BJ (cell line): ENCODE measurements at regions of chr11 and their contacts with region 1.

Region 1: GRCh38 chr11:121464352-121464946 is 11.7 kb upstream of the SORL1-AS1 start:
- DNase-seq: peak; percentile 67
- H3K4me3 ChIP-seq: no peak overlapping the region
- H3K27me3 ChIP-seq: peaks cover 2% of the 10 kb centered on the region
- CTCF ChIP-seq: no peak

Region 2: GRCh38 chr11:121451986-121452608 is 12.4 kb before region 1 on chr11 and contains the start of gene SORL1:
- CTCF ChIA-PET with region 1: interaction called, 18 read pairs
- POLR2A ChIA-PET with region 1: no interaction called
- DNase-seq: no peak
- H3K4me3 ChIP-seq: peak within 1 kb of the TSS; percentile 53
- H3K27me3 ChIP-seq: peaks cover 18% of the 10 kb centered on the region
- CTCF ChIP-seq: peak; percentile 70
- polyA plus RNA-seq, gene SORL1: 0.61 and 1.4 TPM in 2 replicates

Region 3: GRCh38 chr11:121474680-121475079 is 10.2 kb after region 1 on chr11:
- CTCF ChIA-PET with region 1: no interaction called
- POLR2A ChIA-PET with region 1: no interaction called
- DNase-seq: no peak
- H3K4me3 ChIP-seq: no peak overlapping the region
- H3K27me3 ChIP-seq: peaks cover 1% of the 10 kb centered on the region; the same call in 1 of the 2 replicates
- CTCF ChIP-seq: no peak